Psoas muscle (tissue), 8 donors: ENCODE measurements at regions of chrX and their contacts with region 1.

Region 1: DNA sequence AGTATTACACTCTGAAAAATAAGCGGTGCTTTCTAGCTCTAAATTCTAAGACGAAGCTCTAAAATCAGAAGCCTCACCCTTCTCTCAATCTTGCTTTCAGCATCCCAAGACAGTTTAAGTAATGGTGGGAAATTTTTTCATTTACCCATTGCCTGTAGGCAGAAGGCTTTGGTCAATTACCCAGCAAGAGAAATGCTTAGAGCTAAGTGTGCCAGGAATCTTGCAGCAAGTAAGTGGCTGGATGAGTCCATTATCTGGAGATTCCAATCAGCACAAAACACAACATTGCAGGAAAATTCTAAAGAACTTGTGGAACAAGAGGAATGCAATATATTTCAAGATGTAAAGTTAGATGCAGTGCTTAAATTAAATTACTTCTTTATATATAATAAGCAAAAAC is 28.4 kb downstream of the USP26 start:
- DNase-seq: no peak
- ATAC-seq: no peak
- H3K4me3 ChIP-seq: no peak overlapping the region
- H3K27ac ChIP-seq: no peak overlapping the region
- H3K4me1 ChIP-seq: no peaks in the 10 kb centered on the region
- H3K27me3 ChIP-seq: no peaks in the 10 kb centered on the region
- CTCF ChIP-seq: no peak

Region 2: DNA sequence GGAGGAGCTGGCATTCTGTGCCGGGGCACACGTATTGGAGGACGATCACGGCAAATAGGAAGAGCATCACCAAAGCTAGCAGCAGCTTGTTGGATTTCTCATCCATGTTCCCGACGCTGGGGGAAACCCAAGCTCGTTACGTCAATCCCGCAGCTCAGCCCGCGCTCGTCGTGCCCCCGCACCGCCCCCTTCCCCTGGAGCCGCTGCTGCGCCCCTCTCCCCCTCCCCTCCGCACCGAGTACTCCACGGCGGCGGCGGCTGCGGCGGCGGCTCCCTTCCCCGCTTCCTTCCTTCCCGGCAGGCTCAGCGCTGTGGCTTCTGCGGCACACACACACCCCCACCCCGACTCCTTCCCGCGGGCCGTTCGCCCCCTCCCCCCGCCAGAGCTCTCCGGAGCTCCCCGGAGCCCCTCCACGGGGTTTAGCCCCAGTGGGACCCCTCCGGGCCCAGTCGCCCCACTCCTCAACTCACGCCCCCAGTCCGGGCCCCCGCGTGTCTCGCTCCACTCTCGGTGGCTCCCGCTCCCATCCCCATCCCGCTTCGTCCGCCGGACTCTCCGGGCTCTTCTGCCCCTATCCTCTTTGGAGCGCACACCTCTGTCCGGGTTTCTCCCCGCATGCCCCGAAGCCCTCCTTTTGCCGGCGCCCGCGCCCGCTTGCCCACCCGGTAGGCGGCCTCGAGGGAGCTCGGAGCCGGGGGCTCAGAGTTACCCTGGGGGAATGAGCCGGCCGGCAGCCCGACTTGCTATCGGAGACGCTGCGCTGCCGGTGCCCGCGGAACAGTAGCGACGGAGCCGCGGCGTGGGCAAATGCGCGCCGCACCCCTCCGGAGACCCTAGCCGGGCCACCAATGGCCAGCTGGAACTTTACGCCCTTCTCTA is 111.0 kb before region 1 on chrX:
- intact Hi-C with region 1: no loop called
- DNase-seq: peak in 1 of 2 donors; percentile 18
- ATAC-seq: peak; percentile 39 to 59 (median 43)
- H3K4me3 ChIP-seq: peak overlapping the region; percentile 66
- H3K27ac ChIP-seq: peak overlapping the region; percentile 50
- H3K4me1 ChIP-seq: no peaks in the 10 kb centered on the region
- H3K27me3 ChIP-seq: peaks cover 0 to 50% (median 0%) of the 10 kb centered on the region in 3 donors
- CTCF ChIP-seq: no peak

Region 3: GRCh38 chrX:133005066-133005465 is 63.4 kb before region 1 on chrX:
- intact Hi-C with region 1: loop called in 1 of 2 experiments (anchors 2 kb)
- DNase-seq: no peak
- ATAC-seq: no peak
- H3K4me3 ChIP-seq: no peak overlapping the region
- H3K27ac ChIP-seq: no peak overlapping the region
- H3K4me1 ChIP-seq: no peaks in the 10 kb centered on the region
- H3K27me3 ChIP-seq: peaks cover 0 to 4% (median 0%) of the 10 kb centered on the region in 3 donors
- CTCF ChIP-seq: peak; percentile 48